CD4-positive, alpha-beta T cell (primary cell): ENCODE measurements at regions of chr17 and their contacts with region 1.

Region 1: GRCh38 chr17:80195731-80196529 is 24.2 kb downstream of the SGSH start:
- DNase-seq: peak; percentile 29 to 79 (median 59)
- ATAC-seq: peak; percentile 56
- H3K4me3 ChIP-seq: no peak overlapping the region
- H3K4me3 Mint-ChIP-seq: no peak overlapping the region
- H3K27ac ChIP-seq: no peak overlapping the region
- H3K27ac Mint-ChIP-seq: no peak overlapping the region
- H3K4me1 ChIP-seq: peaks cover 4% of the 10 kb centered on the region
- H3K4me1 Mint-ChIP-seq: no peaks in the 10 kb centered on the region
- H3K27me3 ChIP-seq: no peaks in the 10 kb centered on the region
- H3K27me3 Mint-ChIP-seq: peaks cover 8% of the 10 kb centered on the region
- CTCF ChIP-seq: peak; percentile 99

Region 2: GRCh38 chr17:80160536-80160935 is 35.4 kb before region 1 on chr17:
- CTCF ChIA-PET with region 1: no interaction called
- POLR2A ChIA-PET with region 1: no interaction called
- intact Hi-C with region 1: no loop called
- DNase-seq: no peak
- ATAC-seq: no peak
- H3K4me3 ChIP-seq: no peak overlapping the region
- H3K4me3 Mint-ChIP-seq: no peak overlapping the region
- H3K27ac ChIP-seq: no peak overlapping the region
- H3K27ac Mint-ChIP-seq: no peak overlapping the region
- H3K4me1 ChIP-seq: no peaks in the 10 kb centered on the region
- H3K4me1 Mint-ChIP-seq: no peaks in the 10 kb centered on the region
- H3K27me3 ChIP-seq: no peaks in the 10 kb centered on the region
- H3K27me3 Mint-ChIP-seq: peaks cover 13% of the 10 kb centered on the region
- CTCF ChIP-seq: no peak

Region 3: GRCh38 chr17:80219013-80219762 is 23.3 kb after region 1 on chr17:
- CTCF ChIA-PET with region 1: no interaction called
- POLR2A ChIA-PET with region 1: interaction called, 3 read pairs
- intact Hi-C with region 1: loop called in 1 of 2 experiments (anchors 2 kb)
- DNase-seq: peak; percentile 86 to 97 (median 93)
- ATAC-seq: peak; percentile 90
- H3K4me3 ChIP-seq: peak overlapping the region; percentile 99
- H3K4me3 Mint-ChIP-seq: peak overlapping the region; percentile 95
- H3K27ac ChIP-seq: peak overlapping the region; percentile 89 to 93
- H3K27ac Mint-ChIP-seq: peak overlapping the region; percentile 93
- H3K4me1 ChIP-seq: peaks cover 45% of the 10 kb centered on the region
- H3K4me1 Mint-ChIP-seq: peaks cover 43% of the 10 kb centered on the region
- H3K27me3 ChIP-seq: no peaks in the 10 kb centered on the region
- H3K27me3 Mint-ChIP-seq: no peaks in the 10 kb centered on the region
- CTCF ChIP-seq: no peak

Region 4: GRCh38 chr17:80364216-80364618 is 168.3 kb after region 1 on chr17:
- CTCF ChIA-PET with region 1: no interaction called
- POLR2A ChIA-PET with region 1: no interaction called
- intact Hi-C with region 1: loop called (anchors 5 kb)
- DNase-seq: peak in 3 of 14 experiments; percentile 9 to 22 (median 13)
- ATAC-seq: no peak
- H3K4me3 ChIP-seq: no peak overlapping the region
- H3K4me3 Mint-ChIP-seq: no peak overlapping the region
- H3K27ac ChIP-seq: no peak overlapping the region
- H3K27ac Mint-ChIP-seq: no peak overlapping the region
- H3K4me1 ChIP-seq: no peaks in the 10 kb centered on the region
- H3K4me1 Mint-ChIP-seq: no peaks in the 10 kb centered on the region
- H3K27me3 ChIP-seq: no peaks in the 10 kb centered on the region
- H3K27me3 Mint-ChIP-seq: no peaks in the 10 kb centered on the region
- CTCF ChIP-seq: no peak